B cell (primary cell): ENCODE measurements at regions of chr12 and their contacts with region 1.

Region 1: GRCh38 chr12:76083904-76084862 is at the start of gene NAP1L1:
- DNase-seq: peak; percentile 98
- ATAC-seq: peak; percentile 82
- H3K4me3 ChIP-seq: peak within 1 kb of the TSS; percentile 56 to 94 (median 89)
- H3K4me3 Mint-ChIP-seq: peak within 1 kb of the TSS; percentile 99
- H3K27ac ChIP-seq: peak within 1 kb of the TSS; percentile 96 to 98
- H3K27ac Mint-ChIP-seq: peak within 1 kb of the TSS; percentile 99
- H3K4me1 ChIP-seq: peaks cover 26 to 44% of the 10 kb centered on the region in 2 donors
- H3K4me1 Mint-ChIP-seq: peaks cover 50% of the 10 kb centered on the region
- H3K27me3 ChIP-seq: no peaks in the 10 kb centered on the region
- H3K27me3 Mint-ChIP-seq: no peaks in the 10 kb centered on the region
- CTCF ChIP-seq: no peak
- total RNA-seq, gene NAP1L1: 751 and 766 TPM in 2 replicates

Region 2: GRCh38 chr12:74537707-74538385 is 1546.3 kb before region 1 on chr12 and contains the start of gene ATXN7L3B:
- CTCF ChIA-PET with region 1: no interaction called
- POLR2A ChIA-PET with region 1: no interaction called
- intact Hi-C with region 1: loop called (anchors 2 kb)
- DNase-seq: peak; percentile 97
- ATAC-seq: peak; percentile 97
- H3K4me3 ChIP-seq: peak within 1 kb of the TSS; percentile 71 to 97 (median 96)
- H3K4me3 Mint-ChIP-seq: peak within 1 kb of the TSS; percentile 98
- H3K27ac ChIP-seq: peak within 1 kb of the TSS; percentile 92 to 94
- H3K27ac Mint-ChIP-seq: peak within 1 kb of the TSS; percentile 98
- H3K4me1 ChIP-seq: peaks cover 41 to 44% of the 10 kb centered on the region in 2 donors
- H3K4me1 Mint-ChIP-seq: peaks cover 56% of the 10 kb centered on the region
- H3K27me3 ChIP-seq: no peaks in the 10 kb centered on the region
- H3K27me3 Mint-ChIP-seq: no peaks in the 10 kb centered on the region
- CTCF ChIP-seq: no peak
- total RNA-seq, gene ATXN7L3B: 35.3 and 38.6 TPM in 2 replicates

Region 3: DNA sequence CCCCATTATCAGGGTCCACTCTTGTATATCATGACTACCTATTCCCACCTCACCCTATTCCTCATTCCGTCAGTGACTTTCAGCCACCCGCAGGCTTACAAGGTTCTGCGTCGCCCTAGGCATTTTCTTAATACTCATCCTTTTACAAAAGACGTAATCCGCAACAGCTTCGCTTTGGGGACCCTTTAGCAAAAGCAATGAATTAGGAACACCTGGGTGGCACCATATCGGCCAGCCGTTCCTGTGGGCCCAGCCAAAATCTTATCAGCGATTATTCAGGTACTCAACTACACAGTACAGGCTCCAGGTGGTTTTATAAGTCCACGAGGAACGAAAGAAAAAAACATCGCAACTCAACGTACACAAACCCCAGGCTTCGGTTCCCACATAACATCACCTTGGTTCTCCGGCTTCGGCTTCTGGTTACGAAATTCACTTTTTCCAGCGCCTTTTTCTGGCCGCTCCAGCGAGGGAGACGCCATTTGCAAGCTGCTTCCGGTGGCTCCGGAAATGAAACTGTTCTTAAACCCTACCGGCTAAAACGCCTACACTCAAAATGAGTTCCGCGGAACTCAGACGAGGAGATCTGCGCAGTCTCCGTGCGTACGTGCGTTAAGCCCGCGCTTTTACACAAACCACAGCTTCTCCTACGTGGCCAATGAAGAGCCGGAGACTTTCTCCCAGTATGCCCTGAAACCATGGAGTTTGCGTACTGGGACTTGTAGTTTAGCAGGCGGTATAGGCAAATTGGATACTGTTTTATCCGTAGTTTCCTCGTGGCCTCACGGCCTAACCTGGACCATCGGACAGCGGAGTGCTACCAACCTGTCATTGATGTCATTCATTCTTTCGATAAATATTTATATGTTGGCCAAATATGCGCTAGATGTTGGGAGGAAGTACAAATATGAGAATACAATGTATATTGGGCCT is 572.8 kb before region 1 on chr12 and contains the start of gene KRR1:
- CTCF ChIA-PET with region 1: no interaction called
- POLR2A ChIA-PET with region 1: interaction called, 3 read pairs
- intact Hi-C with region 1: loop called (anchors 1 kb)
- DNase-seq: peak; percentile 95
- ATAC-seq: peak; percentile 97
- H3K4me3 ChIP-seq: peak within 1 kb of the TSS; percentile 61 to 100 (median 93)
- H3K4me3 Mint-ChIP-seq: peak within 1 kb of the TSS; percentile 93
- H3K27ac ChIP-seq: peak within 1 kb of the TSS; percentile 72 to 83
- H3K27ac Mint-ChIP-seq: peak within 1 kb of the TSS; percentile 95
- H3K4me1 ChIP-seq: peaks cover 11 to 18% of the 10 kb centered on the region in 2 donors
- H3K4me1 Mint-ChIP-seq: peaks cover 28% of the 10 kb centered on the region
- H3K27me3 ChIP-seq: no peaks in the 10 kb centered on the region
- H3K27me3 Mint-ChIP-seq: no peaks in the 10 kb centered on the region
- CTCF ChIP-seq: no peak
- total RNA-seq, gene KRR1: 80.2 and 87.7 TPM in 2 replicates

Region 4: GRCh38 chr12:75944097-75944904 is 139.9 kb before region 1 on chr12:
- CTCF ChIA-PET with region 1: no interaction called
- POLR2A ChIA-PET with region 1: no interaction called
- intact Hi-C with region 1: no loop called
- DNase-seq: peak; percentile 29
- ATAC-seq: peak; percentile 60
- H3K4me3 ChIP-seq: no peak overlapping the region
- H3K4me3 Mint-ChIP-seq: peak overlapping the region; percentile 57
- H3K27ac ChIP-seq: no peak overlapping the region
- H3K27ac Mint-ChIP-seq: peak overlapping the region; percentile 81
- H3K4me1 ChIP-seq: peaks cover 8 to 12% of the 10 kb centered on the region in 2 donors
- H3K4me1 Mint-ChIP-seq: peaks cover 13% of the 10 kb centered on the region
- H3K27me3 ChIP-seq: no peaks in the 10 kb centered on the region
- H3K27me3 Mint-ChIP-seq: no peaks in the 10 kb centered on the region
- CTCF ChIP-seq: no peak

Region 5: GRCh38 chr12:76348079-76348901 is 264.1 kb after region 1 on chr12 and contains the start of gene BBS10:
- CTCF ChIA-PET with region 1: interaction called, 4 read pairs
- POLR2A ChIA-PET with region 1: interaction called, 9 read pairs
- intact Hi-C with region 1: loop called (anchors 1 kb)
- DNase-seq: peak; percentile 94
- ATAC-seq: peak; percentile 97
- H3K4me3 ChIP-seq: peak within 1 kb of the TSS; percentile 76 to 90 (median 79)
- H3K4me3 Mint-ChIP-seq: peak within 1 kb of the TSS; percentile 92
- H3K27ac ChIP-seq: peak within 1 kb of the TSS; percentile 86 to 89
- H3K27ac Mint-ChIP-seq: peak within 1 kb of the TSS; percentile 98
- H3K4me1 ChIP-seq: peaks cover 17% of the 10 kb centered on the region in 2 donors
- H3K4me1 Mint-ChIP-seq: peaks cover 27% of the 10 kb centered on the region
- H3K27me3 ChIP-seq: no peaks in the 10 kb centered on the region
- H3K27me3 Mint-ChIP-seq: no peaks in the 10 kb centered on the region
- CTCF ChIP-seq: peak; percentile 9
- total RNA-seq, gene BBS10: 11.2 and 12.9 TPM in 2 replicates

Region 6: DNA sequence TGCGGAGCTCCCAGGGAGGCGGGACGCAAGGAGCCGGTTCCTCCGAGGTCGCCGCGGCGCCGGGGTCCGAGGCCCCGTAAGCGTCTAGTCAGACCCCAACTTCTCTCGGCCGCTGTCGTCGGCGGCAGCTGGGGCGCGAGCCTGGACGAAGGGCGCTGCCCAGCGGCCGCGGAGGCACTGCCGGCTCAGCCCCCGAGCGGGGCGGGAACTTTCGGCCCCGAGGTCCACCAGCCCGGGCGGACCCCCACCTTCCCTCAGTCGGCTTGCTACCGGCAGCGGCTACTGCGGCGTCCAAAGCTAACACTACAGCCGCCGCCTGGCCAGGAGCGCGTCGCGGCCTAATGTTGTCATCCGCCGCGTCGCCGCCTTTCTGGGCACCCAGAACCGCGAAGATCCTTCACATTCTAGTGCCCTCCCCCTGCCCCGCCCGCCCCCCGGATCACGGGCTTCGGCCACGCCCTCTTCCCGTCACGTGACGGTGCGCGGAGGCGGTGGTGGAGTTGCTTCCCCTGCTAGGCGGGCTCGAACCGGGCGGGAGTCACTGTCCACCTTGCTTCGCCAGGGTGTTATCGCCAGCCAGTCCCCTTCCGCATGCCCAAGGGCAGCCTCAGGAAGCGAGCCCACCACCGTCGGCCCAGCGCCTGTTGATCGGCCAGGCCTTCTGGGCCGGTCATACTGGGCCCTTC is 475.4 kb after region 1 on chr12 and contains the start of gene OSBPL8:
- CTCF ChIA-PET with region 1: interaction called, 3 read pairs
- POLR2A ChIA-PET with region 1: no interaction called
- intact Hi-C with region 1: loop called (anchors 1 kb)
- DNase-seq: peak; percentile 95
- ATAC-seq: peak; percentile 79
- H3K4me3 ChIP-seq: peak within 1 kb of the TSS; percentile 76 to 99 (median 93)
- H3K4me3 Mint-ChIP-seq: peak within 1 kb of the TSS; percentile 98
- H3K27ac ChIP-seq: peak within 1 kb of the TSS; percentile 93 to 96
- H3K27ac Mint-ChIP-seq: peak within 1 kb of the TSS; percentile 98
- H3K4me1 ChIP-seq: peaks cover 29 to 46% of the 10 kb centered on the region in 2 donors
- H3K4me1 Mint-ChIP-seq: peaks cover 44% of the 10 kb centered on the region
- H3K27me3 ChIP-seq: no peaks in the 10 kb centered on the region
- H3K27me3 Mint-ChIP-seq: no peaks in the 10 kb centered on the region
- CTCF ChIP-seq: no peak
- total RNA-seq, gene OSBPL8: 112 and 116 TPM in 2 replicates

Region 7: DNA sequence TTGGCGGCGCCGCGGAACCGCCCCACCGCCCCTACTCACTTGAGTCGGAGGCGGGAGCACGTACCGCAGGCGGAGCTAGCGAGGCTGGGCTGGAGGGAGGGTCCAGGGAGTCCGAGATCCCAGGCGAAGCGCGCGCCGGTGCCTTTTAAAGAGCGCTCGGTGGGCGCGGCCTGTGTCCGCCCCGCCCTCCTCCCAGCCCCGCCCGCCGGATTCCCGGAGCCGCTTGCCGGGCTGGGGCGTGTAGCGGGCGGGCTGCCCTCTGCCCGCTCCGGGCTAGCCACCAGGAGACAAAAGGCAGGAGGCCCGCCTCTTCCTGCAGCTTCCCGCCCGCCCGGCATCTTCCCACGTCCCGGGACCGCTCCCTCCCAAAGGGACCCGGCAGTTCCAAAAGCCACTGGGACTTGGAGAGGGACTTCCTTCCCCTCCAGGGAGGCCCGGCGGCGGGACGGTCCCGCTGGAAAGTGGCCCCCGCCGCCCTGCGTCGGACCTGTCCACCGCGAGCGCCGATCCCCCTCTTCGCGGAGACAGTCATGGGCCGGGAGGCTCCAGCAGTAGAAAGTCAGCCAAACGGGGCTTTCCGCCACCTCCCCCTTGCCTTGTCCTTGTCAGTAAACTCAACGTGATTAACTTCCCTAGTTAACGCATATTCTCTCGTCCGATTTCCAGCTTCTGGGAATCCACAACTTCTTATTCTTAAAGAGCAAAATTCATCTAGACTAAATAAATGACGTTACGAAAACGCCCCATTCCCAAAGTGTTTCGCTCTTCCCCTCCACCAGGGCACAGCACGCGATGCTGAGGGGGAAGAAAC is 794.9 kb after region 1 on chr12 and contains the start of gene CSRP2:
- CTCF ChIA-PET with region 1: no interaction called
- POLR2A ChIA-PET with region 1: no interaction called
- intact Hi-C with region 1: loop called (anchors 10 kb)
- DNase-seq: peak; percentile 68
- ATAC-seq: peak; percentile 83
- H3K4me3 ChIP-seq: peak within 1 kb of the TSS; percentile 11 to 77 (median 59)
- H3K4me3 Mint-ChIP-seq: peak within 1 kb of the TSS; percentile 92
- H3K27ac ChIP-seq: peak within 1 kb of the TSS in 1 of 2 donors; percentile 26
- H3K27ac Mint-ChIP-seq: no peak within 1 kb of the TSS
- H3K4me1 ChIP-seq: peaks cover 13 to 15% of the 10 kb centered on the region in 2 donors
- H3K4me1 Mint-ChIP-seq: peaks cover 14% of the 10 kb centered on the region
- H3K27me3 ChIP-seq: peaks cover 0 to 31% (median 22%) of the 10 kb centered on the region in 4 experiments
- H3K27me3 Mint-ChIP-seq: peaks cover 68% of the 10 kb centered on the region
- CTCF ChIP-seq: no peak
- total RNA-seq, gene CSRP2: 0.44 TPM in 1 of 2 replicates, not detected in the other